Breast epithelium (tissue), 4 donors: ENCODE measurements at regions of chr12 and their contacts with region 1.

Region 1: GRCh38 chr12:109844983-109845823 is 12.0 kb upstream of the TRPV4 start:
- DNase-seq: peak; percentile 71 to 85
- H3K4me3 ChIP-seq: peak overlapping the region in 2 of 3 donors; percentile 23 to 58
- H3K27ac ChIP-seq: no peak overlapping the region
- H3K4me1 ChIP-seq: no peaks in the 10 kb centered on the region
- H3K27me3 ChIP-seq: no peaks in the 10 kb centered on the region
- CTCF ChIP-seq: peak; percentile 83 to 98 (median 98)
- POLR2A ChIP-seq: no peak

Region 2: DNA sequence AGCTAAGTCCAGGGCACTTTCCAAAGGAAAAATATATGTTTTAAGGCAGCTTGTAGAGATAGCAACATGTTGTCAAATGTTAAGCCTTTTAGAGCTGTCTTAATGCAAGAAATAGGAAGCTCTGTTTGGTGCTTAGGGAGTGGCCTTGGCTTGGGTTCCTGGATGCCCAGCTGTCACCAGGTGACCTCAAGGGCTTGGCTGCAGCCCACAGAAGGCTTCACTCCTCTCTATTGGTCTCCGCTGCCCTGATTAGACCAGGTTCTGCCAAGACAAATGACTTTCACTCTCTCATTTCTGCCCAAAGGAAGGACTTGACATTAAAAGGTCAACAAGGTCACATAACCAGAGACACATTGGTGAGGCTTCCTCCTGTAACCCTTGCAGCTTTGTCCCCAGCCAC is 1639.3 kb before region 1 on chr12:
- intact Hi-C with region 1: loop called (anchors 10 kb)
- DNase-seq: no peak
- H3K4me3 ChIP-seq: no peak overlapping the region
- H3K27ac ChIP-seq: no peak overlapping the region
- H3K4me1 ChIP-seq: no peaks in the 10 kb centered on the region
- H3K27me3 ChIP-seq: peaks cover 0 to 3% of the 10 kb centered on the region in 2 donors
- CTCF ChIP-seq: no peak
- POLR2A ChIP-seq: no peak

Region 3: DNA sequence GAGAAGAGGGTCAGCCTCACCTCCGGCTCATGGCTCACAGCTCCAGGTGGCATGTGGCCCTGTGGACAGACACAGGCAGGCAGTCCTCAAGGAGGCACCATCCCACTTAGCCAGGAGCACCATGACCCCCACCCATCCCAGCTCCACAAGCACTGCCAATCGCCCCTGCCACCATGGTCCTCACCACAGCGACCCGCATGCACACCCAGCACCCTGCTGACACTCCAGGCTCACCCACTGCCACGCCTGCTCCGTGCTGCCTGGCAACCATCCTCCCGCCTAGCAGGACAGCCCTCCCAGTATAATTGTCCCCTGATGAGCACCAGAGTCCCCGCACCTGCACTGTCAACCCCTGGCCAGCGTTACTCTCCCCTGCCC is 62.9 kb before region 1 on chr12:
- intact Hi-C with region 1: no loop called
- DNase-seq: no peak
- H3K4me3 ChIP-seq: no peak overlapping the region
- H3K27ac ChIP-seq: no peak overlapping the region
- H3K4me1 ChIP-seq: no peaks in the 10 kb centered on the region
- H3K27me3 ChIP-seq: no peaks in the 10 kb centered on the region
- CTCF ChIP-seq: no peak
- POLR2A ChIP-seq: no peak